ENCODE measurements at regions of chr13 and their contacts with region 1.

Region 1: DNA sequence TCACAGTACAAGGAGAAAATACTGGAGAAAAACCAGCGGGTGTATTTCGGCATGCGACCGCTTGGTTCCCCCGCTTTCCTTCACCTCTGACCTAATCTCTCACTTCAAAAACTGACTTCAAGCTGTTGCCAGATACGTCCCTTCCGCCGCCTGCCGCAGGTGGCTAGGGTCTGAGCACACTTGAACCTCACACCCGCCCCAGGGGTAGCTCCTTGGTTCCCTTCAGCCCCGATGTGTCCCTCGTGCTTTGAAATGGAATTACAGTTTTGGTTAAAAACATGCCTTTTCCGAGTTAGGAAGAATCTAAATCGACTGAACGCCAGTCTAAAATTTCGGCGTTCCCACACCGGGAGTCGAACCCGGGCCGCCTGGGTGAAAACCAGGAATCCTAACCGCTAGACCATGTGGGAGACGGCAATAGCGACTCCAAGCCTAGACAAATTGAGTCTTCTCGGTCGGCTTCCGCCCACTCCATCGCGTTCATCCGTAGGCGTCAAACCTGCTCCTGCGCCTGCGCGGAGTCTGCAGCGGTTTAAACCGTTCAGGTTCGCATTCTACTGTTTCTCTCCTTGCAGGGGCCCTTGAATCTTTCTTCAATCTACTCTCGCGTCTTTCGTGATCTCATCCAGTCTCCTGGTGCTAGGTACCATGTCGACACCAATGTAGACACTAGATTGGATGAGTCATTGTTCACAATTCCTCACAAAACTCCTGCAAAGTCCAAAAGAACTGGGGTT is 71.5 kb downstream of the NUFIP1 start:
- DNase-seq: peak; percentile 96 to 97
- H3K4me3 ChIP-seq: peak overlapping the region; percentile 61
- H3K4me3 Mint-ChIP-seq: no peak overlapping the region
- H3K27ac Mint-ChIP-seq: no peak overlapping the region
- H3K4me1 ChIP-seq: peaks cover 7% of the 10 kb centered on the region; the same call in 1 of the 2 replicates
- H3K4me1 Mint-ChIP-seq: no peaks in the 10 kb centered on the region
- H3K27me3 ChIP-seq: no peaks in the 10 kb centered on the region
- H3K27me3 Mint-ChIP-seq: no peaks in the 10 kb centered on the region
- CTCF ChIP-seq: peak; percentile 40 to 75

Region 2: DNA sequence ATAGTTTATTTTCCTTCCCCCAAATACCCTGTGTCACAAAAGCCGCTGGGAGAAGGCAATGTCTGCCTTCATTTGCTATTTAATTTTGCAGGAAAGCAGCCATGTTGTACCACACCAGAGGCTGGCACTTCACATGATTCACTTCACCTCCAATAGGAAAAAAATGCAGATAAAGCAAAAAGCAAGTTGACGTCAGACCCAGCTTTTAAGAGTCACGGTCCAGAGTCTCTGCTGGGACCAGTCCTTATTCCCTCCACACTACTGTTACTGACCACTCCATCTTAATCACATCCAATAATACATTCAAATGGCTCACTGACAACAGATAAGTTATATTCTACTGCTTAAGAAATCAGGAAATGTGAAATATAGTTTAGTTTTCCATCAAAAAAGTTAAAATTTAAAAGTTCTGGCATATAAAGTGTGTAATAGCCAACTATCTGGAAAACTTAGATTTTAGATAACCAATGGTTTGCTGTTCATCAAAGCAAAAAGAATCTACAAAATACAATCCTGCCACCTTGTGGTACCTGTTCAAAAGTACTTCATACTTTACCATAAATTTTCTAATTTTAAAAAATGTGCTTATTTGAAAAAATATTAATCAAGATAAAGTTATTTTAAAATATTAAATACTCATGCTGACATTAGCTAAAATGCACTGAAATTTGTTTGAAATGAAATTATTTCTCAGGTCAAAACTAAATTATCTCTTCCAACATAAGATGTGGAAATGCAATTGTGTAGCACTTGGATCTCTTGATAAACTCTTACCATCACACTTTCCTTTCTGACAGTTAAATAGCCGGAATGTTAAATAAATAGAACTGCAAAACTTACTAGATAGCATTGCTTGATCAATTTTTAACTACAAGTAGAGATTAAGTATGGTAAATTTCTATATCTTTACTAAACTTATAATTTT is 446.9 kb before region 1 on chr13:
- CTCF ChIA-PET with region 1: interaction called, 3 read pairs
- POLR2A ChIA-PET with region 1: no interaction called
- intact Hi-C with region 1: loop called (anchors 2 kb)
- DNase-seq: peak in 1 of 2 experiments; percentile 39
- H3K4me3 ChIP-seq: no peak overlapping the region
- H3K4me3 Mint-ChIP-seq: no peak overlapping the region
- H3K27ac Mint-ChIP-seq: no peak overlapping the region
- H3K4me1 ChIP-seq: peaks cover 19% of the 10 kb centered on the region
- H3K4me1 Mint-ChIP-seq: peaks cover 15% of the 10 kb centered on the region
- H3K27me3 ChIP-seq: no peaks in the 10 kb centered on the region
- H3K27me3 Mint-ChIP-seq: no peaks in the 10 kb centered on the region
- CTCF ChIP-seq: peak; percentile 55 to 66

Region 3: DNA sequence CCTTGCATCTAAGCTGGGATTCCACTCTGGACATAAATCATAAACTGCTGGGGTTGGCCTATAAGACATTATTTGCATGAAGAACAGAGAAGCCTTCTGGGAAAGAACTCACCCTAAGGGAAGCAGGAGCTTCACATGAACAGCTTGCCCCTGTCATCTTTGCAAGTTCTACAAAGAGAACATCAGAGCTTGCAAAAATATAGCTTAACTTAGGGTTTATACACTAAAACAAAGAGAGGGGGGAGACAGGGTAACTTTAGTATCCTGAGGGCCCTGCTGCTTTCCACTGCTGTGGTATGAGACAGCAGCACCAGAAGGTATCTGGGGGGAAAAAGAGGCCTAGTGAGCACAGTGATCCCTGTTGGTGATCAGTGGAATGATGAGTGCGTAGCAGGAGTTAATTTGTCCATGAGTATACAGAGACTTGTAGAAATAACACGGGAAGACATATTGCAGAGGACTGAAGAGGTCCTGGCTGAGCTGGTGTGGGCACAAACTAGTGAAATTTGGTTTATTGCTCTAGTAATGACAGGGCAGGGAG is 225.5 kb before region 1 on chr13:
- CTCF ChIA-PET with region 1: no interaction called
- POLR2A ChIA-PET with region 1: no interaction called
- intact Hi-C with region 1: no loop called
- DNase-seq: peak; percentile 33 to 64
- H3K4me3 ChIP-seq: no peak overlapping the region
- H3K4me3 Mint-ChIP-seq: no peak overlapping the region
- H3K27ac Mint-ChIP-seq: no peak overlapping the region
- H3K4me1 ChIP-seq: peaks cover 20% of the 10 kb centered on the region
- H3K4me1 Mint-ChIP-seq: peaks cover 13% of the 10 kb centered on the region
- H3K27me3 ChIP-seq: no peaks in the 10 kb centered on the region
- H3K27me3 Mint-ChIP-seq: no peaks in the 10 kb centered on the region
- CTCF ChIP-seq: no peak

Region 4: DNA sequence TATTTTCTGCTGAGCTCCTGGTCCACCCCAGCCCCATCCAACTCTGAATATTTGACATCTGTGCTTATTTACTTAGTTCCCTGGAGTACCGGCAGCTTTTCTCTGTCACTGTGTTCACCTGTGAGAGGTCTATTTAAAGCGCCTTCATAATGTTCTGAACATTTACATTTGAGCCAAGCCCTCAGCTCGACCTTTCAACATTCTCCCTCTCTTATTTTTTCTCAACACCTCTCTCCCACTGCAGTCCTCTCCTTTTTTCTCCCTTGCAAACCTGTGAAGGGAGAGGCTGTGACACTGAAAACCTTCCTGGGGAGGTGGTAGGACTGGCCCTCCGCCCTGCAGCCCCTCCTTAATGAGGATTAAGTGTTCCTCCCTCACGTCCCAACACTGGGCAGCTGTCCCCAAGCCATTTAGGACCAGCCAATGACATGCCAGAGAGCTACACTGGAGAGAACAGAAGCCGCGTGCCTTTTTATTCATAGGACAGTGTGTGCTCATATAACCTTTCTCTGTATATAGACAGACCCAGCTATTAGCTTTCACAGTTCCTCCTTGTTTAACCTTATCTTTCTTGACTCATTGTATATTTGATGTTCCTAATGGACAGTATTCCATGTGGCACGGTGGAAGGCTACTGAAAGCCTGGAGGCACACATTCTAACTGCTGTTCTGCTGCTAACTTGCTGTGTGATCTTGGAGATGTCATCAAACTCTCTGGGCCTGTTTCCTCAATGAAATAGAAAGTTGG is 63.3 kb before region 1 on chr13:
- CTCF ChIA-PET with region 1: no interaction called
- POLR2A ChIA-PET with region 1: interaction called, 3 read pairs
- intact Hi-C with region 1: loop called (anchors 1 kb)
- DNase-seq: peak; percentile 66 to 79
- H3K4me3 ChIP-seq: peak overlapping the region; percentile 21
- H3K4me3 Mint-ChIP-seq: peak overlapping the region; percentile 74
- H3K27ac Mint-ChIP-seq: peak overlapping the region; percentile 73
- H3K4me1 ChIP-seq: peaks cover 37% of the 10 kb centered on the region
- H3K4me1 Mint-ChIP-seq: peaks cover 45% of the 10 kb centered on the region
- H3K27me3 ChIP-seq: no peaks in the 10 kb centered on the region
- H3K27me3 Mint-ChIP-seq: no peaks in the 10 kb centered on the region
- CTCF ChIP-seq: no peak

Region 5: DNA sequence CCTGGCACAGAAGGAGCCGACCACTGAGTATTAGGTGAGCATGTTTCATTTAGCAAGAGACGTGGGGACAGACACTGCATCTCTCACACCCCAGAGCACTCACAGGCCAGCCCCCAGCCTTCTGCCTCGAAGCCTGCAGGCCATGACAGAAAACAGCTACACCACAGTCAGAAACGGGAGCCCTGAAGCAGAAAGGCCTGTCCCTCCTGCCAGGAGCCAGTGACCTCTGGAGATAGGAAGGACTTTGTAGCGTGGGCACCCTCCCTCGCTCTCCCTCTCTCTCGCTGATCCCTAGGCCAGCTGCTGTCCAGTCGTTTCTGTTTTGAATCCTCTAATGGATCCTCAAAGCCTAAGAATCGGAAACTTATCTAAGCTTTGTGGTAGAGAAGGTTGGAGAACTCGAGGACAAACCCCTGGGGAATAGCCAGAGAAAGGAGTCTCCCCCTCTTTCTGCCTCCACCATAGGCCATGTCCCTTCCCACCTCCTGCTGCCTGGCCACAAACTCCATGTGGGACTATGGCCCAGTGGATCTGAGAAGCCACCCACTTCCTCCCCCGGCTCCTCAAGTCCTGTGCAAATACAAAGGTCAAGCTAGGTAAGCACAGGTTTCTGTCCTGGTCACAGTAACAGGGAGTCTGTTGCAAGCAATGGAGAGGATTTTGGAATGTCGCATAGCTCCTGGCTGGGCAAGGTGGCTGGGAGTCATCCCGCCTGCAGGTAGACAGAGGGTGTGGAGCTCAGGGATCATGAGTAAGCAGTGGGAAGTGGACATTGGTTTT is 23.6 kb before region 1 on chr13:
- CTCF ChIA-PET with region 1: interaction called, 13 read pairs
- POLR2A ChIA-PET with region 1: interaction called, 10 read pairs
- intact Hi-C with region 1: loop called (anchors 1 kb)
- DNase-seq: peak; percentile 79 to 88
- H3K4me3 ChIP-seq: no peak overlapping the region
- H3K4me3 Mint-ChIP-seq: no peak overlapping the region
- H3K27ac Mint-ChIP-seq: peak overlapping the region; percentile 86
- H3K4me1 ChIP-seq: peaks cover 21% of the 10 kb centered on the region
- H3K4me1 Mint-ChIP-seq: peaks cover 14% of the 10 kb centered on the region
- H3K27me3 ChIP-seq: no peaks in the 10 kb centered on the region
- H3K27me3 Mint-ChIP-seq: no peaks in the 10 kb centered on the region
- CTCF ChIP-seq: no peak

Region 6: DNA sequence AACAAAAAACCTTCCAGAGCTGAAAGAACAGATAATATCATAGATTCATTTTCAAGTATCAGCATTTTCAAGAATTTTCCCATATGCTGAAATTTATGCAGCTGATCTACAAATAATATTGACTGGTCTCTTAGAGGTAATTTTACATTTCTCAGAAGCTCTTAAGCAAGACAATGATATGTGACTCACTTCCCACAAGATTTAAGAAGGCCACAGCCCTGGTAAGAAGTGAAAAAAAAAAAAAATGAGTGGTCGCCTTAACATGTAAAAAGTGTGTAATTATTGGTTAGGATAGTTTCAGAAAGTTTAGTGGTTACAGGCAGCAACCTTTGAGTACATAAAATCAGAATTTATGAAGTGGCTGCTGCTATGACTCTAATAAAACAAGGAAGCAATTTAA is 17.0 kb after region 1 on chr13:
- CTCF ChIA-PET with region 1: interaction called, 3 read pairs
- POLR2A ChIA-PET with region 1: no interaction called
- intact Hi-C with region 1: loop called (anchors 2 kb)
- DNase-seq: no peak
- H3K4me3 ChIP-seq: no peak overlapping the region
- H3K4me3 Mint-ChIP-seq: no peak overlapping the region
- H3K27ac Mint-ChIP-seq: no peak overlapping the region
- H3K4me1 ChIP-seq: no peaks in the 10 kb centered on the region
- H3K4me1 Mint-ChIP-seq: peaks cover 6% of the 10 kb centered on the region
- H3K27me3 ChIP-seq: no peaks in the 10 kb centered on the region
- H3K27me3 Mint-ChIP-seq: no peaks in the 10 kb centered on the region
- CTCF ChIP-seq: no peak

Region 7: GRCh38 chr13:44969551-44970484 is 52.1 kb after region 1 on chr13:
- CTCF ChIA-PET with region 1: interaction called, 4 read pairs
- POLR2A ChIA-PET with region 1: no interaction called
- intact Hi-C with region 1: loop called (anchors 1 kb)
- DNase-seq: peak in 1 of 2 experiments; percentile 62
- H3K4me3 ChIP-seq: no peak overlapping the region
- H3K4me3 Mint-ChIP-seq: no peak overlapping the region
- H3K27ac Mint-ChIP-seq: no peak overlapping the region
- H3K4me1 ChIP-seq: peaks cover 14% of the 10 kb centered on the region
- H3K4me1 Mint-ChIP-seq: peaks cover 14% of the 10 kb centered on the region
- H3K27me3 ChIP-seq: no peaks in the 10 kb centered on the region
- H3K27me3 Mint-ChIP-seq: no peaks in the 10 kb centered on the region
- CTCF ChIP-seq: peak; percentile 74 to 81

Measured in Caco-2 (cell line).